Posterior vena cava (tissue), 2 donors: ENCODE measurements at regions of chr21 and their contacts with region 1.

Region 1: GRCh38 chr21:32702702-32703101 is 25.1 kb downstream of the SYNJ1 start:
- DNase-seq: no peak

Region 2: DNA sequence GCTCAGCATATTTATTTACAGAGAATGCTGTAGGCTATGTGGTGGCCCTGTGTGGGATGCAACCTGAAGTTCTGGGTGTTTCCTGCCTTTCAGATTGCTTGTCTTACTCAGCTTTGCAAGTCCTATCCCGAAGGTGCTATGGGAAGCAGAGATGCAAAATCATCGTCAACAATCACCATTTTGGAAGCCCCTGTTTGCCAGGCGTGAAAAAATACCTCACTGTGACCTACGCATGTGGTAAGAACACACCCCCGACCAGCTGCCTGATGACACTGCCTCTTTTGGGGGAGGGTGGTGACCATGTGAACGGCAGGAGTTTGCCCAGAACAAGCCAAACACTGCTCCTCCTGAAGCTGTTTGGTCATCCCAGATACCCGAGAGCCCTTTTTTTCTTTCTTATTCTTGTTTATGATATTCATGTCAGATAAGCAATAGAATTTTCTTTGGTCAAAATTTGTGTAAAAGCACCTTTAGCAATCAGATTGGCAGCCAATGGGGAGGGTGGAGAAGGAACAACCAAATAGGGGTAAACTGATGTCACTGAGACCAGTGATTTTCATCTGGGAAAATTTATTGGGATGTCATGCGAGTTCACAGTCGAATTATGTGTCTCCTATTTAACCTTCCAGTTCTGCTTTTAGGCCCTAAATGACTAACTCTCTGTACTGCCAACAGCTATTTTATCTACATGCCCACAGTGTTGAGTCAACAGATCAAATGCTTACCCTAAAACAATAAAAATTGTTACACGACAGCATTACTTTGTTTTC is 207.6 kb before region 1 on chr21:
- intact Hi-C with region 1: no loop called
- DNase-seq: no peak

Region 3: GRCh38 chr21:34113842-34114241 is 1411.1 kb after region 1 on chr21:
- intact Hi-C with region 1: loop called in 1 of 2 experiments (anchors 10 kb)
- DNase-seq: no peak